Heart left ventricle (tissue), 16 donors: ENCODE measurements at regions of chr12 and their contacts with region 1.

Region 1: GRCh38 chr12:10501031-10501430 is 4.7 kb upstream of the EIF2S3B start:
- DNase-seq: no peak
- ATAC-seq: no peak
- H3K4me3 ChIP-seq: no peak overlapping the region
- H3K27ac ChIP-seq: no peak overlapping the region
- H3K4me1 ChIP-seq: no peaks in the 10 kb centered on the region
- H3K27me3 ChIP-seq: peaks cover 0 to 7% (median 0%) of the 10 kb centered on the region in 9 donors
- CTCF ChIP-seq: peak in 4 of 12 donors; percentile 31 to 43 (median 37)
- POLR2A ChIP-seq: no peak

Region 2: DNA sequence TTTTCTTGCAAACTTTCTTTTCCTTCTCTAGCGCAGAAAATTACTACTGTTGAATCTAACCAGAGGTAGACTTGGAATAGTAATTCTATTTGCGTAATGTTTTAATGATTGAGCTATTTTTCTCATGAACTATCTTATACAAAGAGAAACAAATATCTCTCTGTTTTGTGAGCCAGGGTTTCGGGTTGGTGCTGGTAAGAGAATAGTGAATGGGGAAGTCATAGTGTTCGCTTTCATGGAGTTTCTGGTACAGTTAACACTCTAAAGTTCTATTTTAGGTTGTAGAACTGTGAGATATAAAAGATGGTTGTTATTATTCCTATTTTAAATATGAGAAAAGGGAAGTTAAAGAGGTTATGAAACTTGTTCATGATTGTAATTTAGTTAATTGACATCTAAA is 508.7 kb before region 1 on chr12:
- intact Hi-C with region 1: no loop called
- DNase-seq: no peak
- ATAC-seq: no peak
- H3K4me3 ChIP-seq: peak overlapping the region in 1 of 12 donors; percentile 3
- H3K27ac ChIP-seq: peak overlapping the region in 1 of 12 donors; percentile 54
- H3K4me1 ChIP-seq: no peaks in the 10 kb centered on the region
- H3K27me3 ChIP-seq: peaks cover 0 to 12% (median 0%) of the 10 kb centered on the region in 9 donors
- CTCF ChIP-seq: no peak
- POLR2A ChIP-seq: no peak

Region 3: GRCh38 chr12:10331642-10332239 is 169.3 kb before region 1 on chr12:
- intact Hi-C with region 1: loop called in 2 of 10 experiments (anchors 5 kb)
- DNase-seq: no peak
- ATAC-seq: peak in 3 of 4 donors; percentile 70 to 75 (median 71)
- H3K4me3 ChIP-seq: no peak overlapping the region
- H3K27ac ChIP-seq: no peak overlapping the region
- H3K4me1 ChIP-seq: no peaks in the 10 kb centered on the region
- H3K27me3 ChIP-seq: no peaks in the 10 kb centered on the region
- CTCF ChIP-seq: peak; percentile 43 to 80 (median 64)
- POLR2A ChIP-seq: no peak